Activated naive CD4-positive, alpha-beta T cell treated with anti-CD3 and anti-CD28 coated beads for 36 hours (primary cell): ENCODE measurements at regions of chr6 and their contacts with region 1.

Region 1: DNA sequence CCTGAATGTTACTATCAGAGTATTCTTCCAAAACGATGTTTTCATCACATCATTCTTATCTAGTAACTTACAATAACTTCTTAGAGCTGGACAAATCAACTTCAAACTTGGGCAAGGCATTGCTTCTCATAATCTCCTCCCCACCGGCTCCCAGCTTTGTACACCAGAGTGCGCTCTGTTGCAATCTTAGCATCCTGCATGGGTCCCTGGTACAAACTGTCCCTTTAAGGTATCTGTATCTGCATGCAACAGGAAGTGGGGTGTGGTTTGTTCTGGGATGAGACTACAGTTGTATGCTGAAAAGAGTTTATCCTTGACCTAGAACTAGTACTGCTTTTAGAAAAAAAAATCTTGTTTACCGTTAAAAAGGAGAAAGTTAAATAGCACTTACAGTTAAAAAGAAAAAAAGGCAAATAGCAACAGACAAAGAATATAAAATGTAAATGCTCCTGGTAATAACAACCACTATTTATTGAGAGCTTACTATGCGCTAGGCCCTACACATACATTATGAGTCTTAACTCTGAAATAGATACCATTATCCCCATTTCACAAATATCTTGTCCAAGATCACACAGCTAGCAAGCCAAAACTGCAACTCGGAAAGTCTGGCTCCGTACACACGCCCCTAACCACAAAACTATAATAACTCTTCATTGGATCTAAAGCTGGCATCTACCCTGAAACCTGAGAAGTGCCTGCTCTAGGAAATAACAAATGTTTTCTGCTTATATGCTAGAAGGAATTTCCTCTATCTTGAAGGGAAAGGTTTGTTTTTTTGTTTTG is 9.8 kb upstream of the HECA start:
- DNase-seq: peak; percentile 93
- H3K4me3 Mint-ChIP-seq: peak overlapping the region; percentile 54
- H3K27ac Mint-ChIP-seq: peak overlapping the region; percentile 94
- H3K4me1 Mint-ChIP-seq: peaks cover 56% of the 10 kb centered on the region
- H3K27me3 Mint-ChIP-seq: no peaks in the 10 kb centered on the region

Region 2: DNA sequence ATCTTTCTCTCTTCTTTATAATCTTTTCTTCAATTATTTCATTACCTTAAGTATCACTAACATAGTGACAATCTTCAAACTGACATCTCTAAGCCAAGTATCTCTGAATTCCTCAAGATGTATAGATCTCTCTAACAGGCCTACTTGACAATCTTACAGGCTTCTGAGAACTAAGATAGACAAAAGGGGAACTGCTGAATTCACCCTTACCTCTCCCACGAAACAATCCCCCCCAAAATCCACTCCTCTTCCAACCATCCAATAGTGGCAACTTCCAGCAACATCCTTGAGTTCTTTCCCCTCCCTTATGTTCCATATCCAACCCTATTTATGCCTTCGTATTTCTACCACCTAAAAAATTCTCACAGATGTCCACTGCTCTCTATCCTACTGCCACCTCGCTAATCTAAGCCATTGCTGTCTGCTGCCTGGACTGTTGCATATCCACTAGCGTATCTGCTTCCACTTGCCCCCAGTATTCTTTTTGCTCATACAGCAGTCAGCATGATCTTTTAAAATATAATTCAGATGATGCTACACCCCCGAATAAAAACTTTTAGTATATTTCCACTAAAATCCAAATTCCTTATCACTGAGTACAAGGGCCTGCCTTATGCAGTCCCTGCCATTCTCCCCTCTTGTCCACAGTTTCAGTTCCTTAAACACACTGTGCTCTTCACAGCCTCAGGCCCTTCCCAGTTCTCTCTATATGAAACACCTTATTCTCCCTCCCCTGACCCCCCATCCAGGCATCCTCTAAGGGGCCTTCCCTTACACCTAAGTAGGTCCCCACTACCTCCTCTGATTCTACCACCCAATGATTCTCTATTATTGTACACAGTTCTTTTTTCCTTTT is 145.0 kb before region 1 on chr6:
- CTCF ChIA-PET with region 1: no interaction called
- intact Hi-C with region 1: no loop called
- DNase-seq: no peak
- H3K4me3 Mint-ChIP-seq: no peak overlapping the region
- H3K27ac Mint-ChIP-seq: no peak overlapping the region
- H3K4me1 Mint-ChIP-seq: peaks cover 46% of the 10 kb centered on the region
- H3K27me3 Mint-ChIP-seq: no peaks in the 10 kb centered on the region

Region 3: GRCh38 chr6:139146317-139146726 is 21.2 kb after region 1 on chr6:
- CTCF ChIA-PET with region 1: interaction called, 10 read pairs
- intact Hi-C with region 1: loop called (anchors 1 kb)
- DNase-seq: no peak
- H3K4me3 Mint-ChIP-seq: peak overlapping the region; percentile 61
- H3K27ac Mint-ChIP-seq: peak overlapping the region; percentile 95
- H3K4me1 Mint-ChIP-seq: peaks cover 91% of the 10 kb centered on the region
- H3K27me3 Mint-ChIP-seq: no peaks in the 10 kb centered on the region

Region 4: DNA sequence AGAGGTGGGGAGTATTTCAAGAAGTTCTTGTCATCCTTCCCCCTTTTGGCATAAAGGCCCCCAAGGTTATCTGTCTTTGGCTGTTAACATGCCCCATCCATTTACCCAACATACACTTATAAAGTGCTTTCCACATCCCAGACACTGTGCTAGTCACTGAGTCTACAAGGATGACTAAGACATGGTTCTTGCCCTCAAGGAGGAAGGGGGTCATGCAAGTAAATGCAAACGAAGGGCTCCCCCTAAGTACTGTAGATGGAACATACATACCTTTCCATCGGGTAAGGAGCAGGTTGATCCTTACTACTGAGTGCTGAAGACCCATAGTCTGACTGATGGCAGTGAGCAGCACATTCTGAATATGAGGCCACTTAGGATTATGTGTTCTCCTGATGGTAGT is 48.1 kb after region 1 on chr6:
- CTCF ChIA-PET with region 1: interaction called, 12 read pairs
- intact Hi-C with region 1: loop called (anchors 1 kb)
- DNase-seq: peak; percentile 46
- H3K4me3 Mint-ChIP-seq: no peak overlapping the region
- H3K27ac Mint-ChIP-seq: peak overlapping the region; percentile 85
- H3K4me1 Mint-ChIP-seq: peaks cover 88% of the 10 kb centered on the region
- H3K27me3 Mint-ChIP-seq: no peaks in the 10 kb centered on the region

Region 5: GRCh38 chr6:139250296-139251044 is 125.4 kb after region 1 on chr6:
- CTCF ChIA-PET with region 1: no interaction called
- intact Hi-C with region 1: loop called (anchors 1 kb)
- DNase-seq: peak; percentile 66
- H3K4me3 Mint-ChIP-seq: no peak overlapping the region
- H3K27ac Mint-ChIP-seq: peak overlapping the region; percentile 20
- H3K4me1 Mint-ChIP-seq: peaks cover 40% of the 10 kb centered on the region
- H3K27me3 Mint-ChIP-seq: no peaks in the 10 kb centered on the region

Region 6: GRCh38 chr6:139297921-139298320 is 172.8 kb after region 1 on chr6:
- CTCF ChIA-PET with region 1: no interaction called
- intact Hi-C with region 1: no loop called
- DNase-seq: no peak
- H3K4me3 Mint-ChIP-seq: no peak overlapping the region
- H3K27ac Mint-ChIP-seq: no peak overlapping the region
- H3K4me1 Mint-ChIP-seq: peaks cover 37% of the 10 kb centered on the region
- H3K27me3 Mint-ChIP-seq: no peaks in the 10 kb centered on the region

Region 7: DNA sequence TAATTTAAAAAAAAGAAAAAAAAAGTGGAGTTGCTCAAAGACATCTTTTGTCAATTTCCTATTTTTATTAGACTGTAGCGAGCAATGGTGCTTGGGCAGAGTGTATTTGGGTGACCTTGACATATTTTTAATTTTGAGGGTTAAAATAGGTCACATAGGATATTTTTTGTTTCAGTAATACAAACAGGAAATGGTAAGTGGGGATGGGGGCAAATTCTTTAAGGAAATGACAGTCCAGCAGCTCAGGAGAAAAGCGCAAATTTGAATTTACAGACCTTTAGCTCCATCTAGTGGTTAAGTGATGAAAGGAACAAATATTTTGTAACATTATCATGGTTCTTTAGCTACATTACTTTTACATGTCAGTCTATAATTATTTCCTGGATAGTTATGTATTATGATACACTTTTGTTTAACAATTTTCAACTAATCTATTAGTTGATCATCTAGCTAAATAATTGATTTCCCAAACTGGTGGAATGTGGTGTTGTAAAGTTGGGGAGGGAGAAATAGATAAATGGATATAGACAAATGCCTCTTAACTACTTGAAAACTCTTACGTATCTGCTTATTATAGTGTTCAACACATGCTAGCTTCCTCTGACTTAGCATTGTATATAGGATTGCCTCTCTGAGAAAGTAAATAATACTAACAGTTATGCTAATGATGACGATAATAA is 239.4 kb after region 1 on chr6:
- CTCF ChIA-PET with region 1: interaction called, 34 read pairs
- intact Hi-C with region 1: loop called (anchors 1 kb)
- DNase-seq: no peak
- H3K4me3 Mint-ChIP-seq: no peak overlapping the region
- H3K27ac Mint-ChIP-seq: no peak overlapping the region
- H3K4me1 Mint-ChIP-seq: peaks cover 26% of the 10 kb centered on the region
- H3K27me3 Mint-ChIP-seq: no peaks in the 10 kb centered on the region

Region 8: DNA sequence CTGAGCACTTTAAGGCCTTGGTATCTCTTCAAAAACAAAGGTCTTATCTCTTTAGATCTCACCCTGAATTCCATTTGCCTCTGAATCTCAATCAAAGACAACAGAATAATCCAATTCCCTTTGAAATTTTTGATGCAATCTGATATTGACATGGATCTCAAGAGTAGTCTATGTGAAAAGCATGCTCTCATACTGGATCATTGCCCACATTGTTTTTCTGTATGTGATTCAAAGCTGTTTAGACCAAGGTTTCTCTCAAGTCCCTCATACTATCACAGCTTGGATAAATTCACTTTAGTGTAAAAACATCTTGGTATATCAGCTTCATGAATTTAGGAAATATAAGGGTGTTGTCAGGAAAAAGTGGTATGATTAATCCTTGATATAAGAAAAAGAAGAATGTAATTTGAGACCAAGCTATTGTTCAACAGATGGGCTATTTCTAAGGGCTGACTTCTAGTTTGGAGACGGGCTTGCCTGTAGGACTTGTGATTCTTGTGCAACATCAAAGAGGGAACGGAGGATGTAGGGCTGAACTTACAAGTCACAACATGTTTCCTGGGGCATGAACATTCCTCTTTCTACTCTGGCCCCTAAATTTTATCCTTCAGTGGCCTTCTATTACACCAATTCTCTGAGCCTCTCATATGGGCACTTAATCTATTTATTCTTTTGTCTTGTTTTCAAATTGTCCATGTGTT is 327.2 kb after region 1 on chr6:
- CTCF ChIA-PET with region 1: no interaction called
- intact Hi-C with region 1: no loop called
- DNase-seq: no peak
- H3K4me3 Mint-ChIP-seq: no peak overlapping the region
- H3K27ac Mint-ChIP-seq: no peak overlapping the region
- H3K4me1 Mint-ChIP-seq: no peaks in the 10 kb centered on the region
- H3K27me3 Mint-ChIP-seq: no peaks in the 10 kb centered on the region

Region 9: DNA sequence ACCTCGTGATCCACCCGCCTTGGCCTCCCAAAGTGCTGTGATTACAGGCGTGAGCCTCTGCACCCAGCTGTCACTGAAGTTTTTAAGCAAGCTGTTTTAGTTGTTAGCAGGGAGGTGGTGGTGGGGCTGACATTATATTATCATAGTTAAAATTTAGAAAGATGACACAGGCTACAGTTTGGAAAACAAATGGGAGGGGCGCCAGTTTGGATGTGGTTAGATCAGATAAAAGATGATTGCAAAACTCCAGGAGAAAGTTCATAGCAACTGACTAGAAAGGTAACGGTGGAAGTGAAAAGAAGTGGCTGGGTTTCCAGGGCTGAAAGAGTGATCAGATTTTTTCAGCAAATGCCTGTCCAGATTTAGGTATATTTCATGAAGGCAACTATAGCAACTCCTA is 561.2 kb after region 1 on chr6:
- CTCF ChIA-PET with region 1: no interaction called
- intact Hi-C with region 1: no loop called
- DNase-seq: no peak
- H3K4me3 Mint-ChIP-seq: no peak overlapping the region
- H3K27ac Mint-ChIP-seq: no peak overlapping the region
- H3K4me1 Mint-ChIP-seq: no peaks in the 10 kb centered on the region
- H3K27me3 Mint-ChIP-seq: peaks cover 2% of the 10 kb centered on the region